Caco-2 (cell line): ENCODE measurements at regions of chr4 and their contacts with region 1.

Region 1: GRCh38 chr4:94256828-94257227 is 49.2 kb downstream of the SMARCAD1 start:
- DNase-seq: no peak
- H3K4me3 ChIP-seq: no peak overlapping the region
- H3K4me3 Mint-ChIP-seq: no peak overlapping the region
- H3K27ac Mint-ChIP-seq: no peak overlapping the region
- H3K4me1 ChIP-seq: no peaks in the 10 kb centered on the region
- H3K4me1 Mint-ChIP-seq: no peaks in the 10 kb centered on the region
- H3K27me3 ChIP-seq: no peaks in the 10 kb centered on the region
- H3K27me3 Mint-ChIP-seq: no peaks in the 10 kb centered on the region
- CTCF ChIP-seq: peak; percentile 18 to 30

Region 2: DNA sequence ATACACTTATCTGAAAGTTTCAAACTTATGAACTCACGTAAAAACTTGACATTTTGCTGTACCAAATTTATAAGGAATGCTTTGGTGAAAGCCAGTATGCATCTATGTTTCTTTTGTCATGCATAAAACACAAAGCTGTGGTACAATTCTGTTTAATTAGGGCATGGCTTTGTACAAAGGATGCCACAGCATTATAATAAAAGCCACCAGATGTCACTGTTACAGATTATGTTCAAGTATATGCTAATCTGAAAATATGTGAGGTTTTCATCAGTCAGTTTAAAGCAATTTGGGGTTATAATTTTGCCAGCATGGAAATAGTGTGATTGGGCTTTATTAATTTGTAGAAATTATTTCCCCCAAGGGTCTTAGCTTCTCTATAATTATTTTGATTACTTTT is 359.3 kb before region 1 on chr4:
- CTCF ChIA-PET with region 1: no interaction called
- POLR2A ChIA-PET with region 1: no interaction called
- intact Hi-C with region 1: loop called (anchors 2 kb)
- DNase-seq: no peak
- H3K4me3 ChIP-seq: no peak overlapping the region
- H3K4me3 Mint-ChIP-seq: no peak overlapping the region
- H3K27ac Mint-ChIP-seq: no peak overlapping the region
- H3K4me1 ChIP-seq: no peaks in the 10 kb centered on the region
- H3K4me1 Mint-ChIP-seq: no peaks in the 10 kb centered on the region
- H3K27me3 ChIP-seq: no peaks in the 10 kb centered on the region
- H3K27me3 Mint-ChIP-seq: no peaks in the 10 kb centered on the region
- CTCF ChIP-seq: peak in 1 of 2 experiments; percentile 29

Region 3: GRCh38 chr4:94076498-94076897 is 180.3 kb before region 1 on chr4:
- CTCF ChIA-PET with region 1: no interaction called
- POLR2A ChIA-PET with region 1: no interaction called
- intact Hi-C with region 1: no loop called
- DNase-seq: no peak
- H3K4me3 ChIP-seq: no peak overlapping the region
- H3K4me3 Mint-ChIP-seq: no peak overlapping the region
- H3K27ac Mint-ChIP-seq: no peak overlapping the region
- H3K4me1 ChIP-seq: no peaks in the 10 kb centered on the region
- H3K4me1 Mint-ChIP-seq: no peaks in the 10 kb centered on the region
- H3K27me3 ChIP-seq: no peaks in the 10 kb centered on the region
- H3K27me3 Mint-ChIP-seq: no peaks in the 10 kb centered on the region
- CTCF ChIP-seq: no peak

Region 4: DNA sequence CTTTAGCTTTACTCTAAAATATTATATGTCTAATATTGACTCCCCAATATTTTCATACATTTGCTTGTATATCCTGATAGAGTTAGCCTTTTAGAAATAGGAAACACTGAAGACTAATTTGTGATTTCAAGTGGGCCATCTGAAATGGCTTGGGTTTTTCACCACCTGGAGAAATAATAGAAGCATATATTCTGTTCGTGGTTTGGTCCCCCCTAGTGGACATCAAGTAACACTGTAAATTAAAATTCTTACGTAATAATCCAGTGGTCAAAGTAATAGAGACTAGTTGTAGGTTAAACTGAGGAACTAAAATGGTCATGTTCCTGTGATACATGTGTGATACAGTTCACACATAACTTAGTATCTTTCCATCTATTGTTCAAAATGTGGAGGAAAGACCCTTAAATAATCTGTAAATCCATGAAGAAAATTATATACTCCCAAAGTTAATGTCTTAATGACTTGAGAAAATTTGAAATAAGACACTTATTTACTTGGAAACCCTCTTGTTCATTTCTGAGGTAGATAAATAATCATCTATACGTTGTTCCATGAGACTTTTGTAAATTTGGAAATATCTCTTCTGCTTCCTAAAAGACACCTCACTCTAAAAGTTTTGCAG is 129.0 kb before region 1 on chr4:
- CTCF ChIA-PET with region 1: no interaction called
- POLR2A ChIA-PET with region 1: no interaction called
- intact Hi-C with region 1: loop called (anchors 2 kb)
- DNase-seq: peak in 1 of 2 experiments; percentile 13
- H3K4me3 ChIP-seq: no peak overlapping the region
- H3K4me3 Mint-ChIP-seq: no peak overlapping the region
- H3K27ac Mint-ChIP-seq: no peak overlapping the region
- H3K4me1 ChIP-seq: no peaks in the 10 kb centered on the region
- H3K4me1 Mint-ChIP-seq: no peaks in the 10 kb centered on the region
- H3K27me3 ChIP-seq: no peaks in the 10 kb centered on the region
- H3K27me3 Mint-ChIP-seq: peaks cover 3% of the 10 kb centered on the region
- CTCF ChIP-seq: peak; percentile 29 to 45

Region 5: GRCh38 chr4:94551643-94552564 is 295.1 kb after region 1 on chr4:
- CTCF ChIA-PET with region 1: no interaction called
- POLR2A ChIA-PET with region 1: no interaction called
- intact Hi-C with region 1: no loop called
- DNase-seq: no peak
- H3K4me3 ChIP-seq: no peak overlapping the region
- H3K4me3 Mint-ChIP-seq: no peak overlapping the region
- H3K27ac Mint-ChIP-seq: peak overlapping the region; percentile 53
- H3K4me1 ChIP-seq: peaks cover 63% of the 10 kb centered on the region
- H3K4me1 Mint-ChIP-seq: peaks cover 30% of the 10 kb centered on the region
- H3K27me3 ChIP-seq: no peaks in the 10 kb centered on the region
- H3K27me3 Mint-ChIP-seq: no peaks in the 10 kb centered on the region
- CTCF ChIP-seq: no peak